ENCODE measurements at regions of chr13 and their contacts with region 1.

Region 1: GRCh38 chr13:19959831-19960652 is 1.5 kb downstream of the ZMYM2 start:
- DNase-seq: peak; percentile 90
- ATAC-seq: peak; percentile 82
- H3K4me3 ChIP-seq: peak overlapping the region; percentile 75 to 97 (median 96)
- H3K27ac ChIP-seq: peak overlapping the region; percentile 81
- H3K4me1 ChIP-seq: peaks cover 28% of the 10 kb centered on the region
- H3K27me3 ChIP-seq: no peaks in the 10 kb centered on the region; a peak in 1 of 5 replicates
- CTCF ChIP-seq: peak; percentile 82
- EP300 ChIP-seq: no peak
- POLR2A ChIP-seq: peak in 1 of 2 experiments; percentile 44; a peak in 1 of 4 replicates
- RAD21 ChIP-seq: peak; percentile 68; the same call in 1 of the 2 replicates

Region 2: DNA sequence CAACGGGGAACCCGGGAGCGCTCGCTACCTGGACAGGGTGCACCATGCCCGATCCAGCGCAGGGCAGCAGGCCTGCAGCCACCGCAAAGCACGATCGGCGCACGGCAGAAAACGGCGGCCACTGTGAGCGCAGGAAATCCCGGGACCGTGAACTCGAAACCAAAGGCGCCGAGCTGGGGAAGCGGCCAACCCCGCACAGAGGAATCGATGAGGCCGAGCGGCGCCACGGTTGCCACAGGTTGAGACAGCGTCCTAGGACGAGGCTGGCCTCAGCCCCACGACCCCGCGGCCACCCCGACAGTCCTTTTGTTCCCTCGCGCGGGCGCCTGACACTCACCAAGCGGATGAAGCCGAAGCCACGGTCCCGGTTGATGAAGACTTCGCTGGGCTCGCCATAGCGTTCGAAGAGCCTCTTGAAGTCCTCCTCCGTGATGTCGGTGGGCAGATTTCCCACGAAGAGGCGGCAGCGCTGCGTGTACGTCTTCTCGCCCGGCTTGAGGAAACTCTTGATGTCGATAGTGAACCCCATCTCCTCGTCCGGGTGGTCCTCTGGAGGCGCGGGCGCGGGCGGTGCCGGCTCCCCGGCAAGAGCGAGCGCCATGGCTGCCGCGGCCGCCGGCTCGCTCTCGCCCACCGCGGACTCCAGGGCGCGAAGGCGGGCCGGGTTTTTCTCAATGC is 177.9 kb before region 1 on chr13:
- CTCF ChIA-PET with region 1: no interaction called
- POLR2A ChIA-PET with region 1: no interaction called
- in situ Hi-C with region 1: no loop called
- intact Hi-C with region 1: loop called (anchors 5 kb)
- DNase-seq: no peak
- ATAC-seq: peak; percentile 70
- H3K4me3 ChIP-seq: peak overlapping the region; percentile 93 to 99 (median 94)
- H3K27ac ChIP-seq: peak overlapping the region; percentile 87
- H3K4me1 ChIP-seq: peaks cover 5% of the 10 kb centered on the region; the same call in 1 of the 2 replicates
- H3K27me3 ChIP-seq: no peaks in the 10 kb centered on the region; a peak in 1 of 5 replicates
- CTCF ChIP-seq: no peak
- EP300 ChIP-seq: no peak
- POLR2A ChIP-seq: no peak
- RAD21 ChIP-seq: no peak

Region 3: DNA sequence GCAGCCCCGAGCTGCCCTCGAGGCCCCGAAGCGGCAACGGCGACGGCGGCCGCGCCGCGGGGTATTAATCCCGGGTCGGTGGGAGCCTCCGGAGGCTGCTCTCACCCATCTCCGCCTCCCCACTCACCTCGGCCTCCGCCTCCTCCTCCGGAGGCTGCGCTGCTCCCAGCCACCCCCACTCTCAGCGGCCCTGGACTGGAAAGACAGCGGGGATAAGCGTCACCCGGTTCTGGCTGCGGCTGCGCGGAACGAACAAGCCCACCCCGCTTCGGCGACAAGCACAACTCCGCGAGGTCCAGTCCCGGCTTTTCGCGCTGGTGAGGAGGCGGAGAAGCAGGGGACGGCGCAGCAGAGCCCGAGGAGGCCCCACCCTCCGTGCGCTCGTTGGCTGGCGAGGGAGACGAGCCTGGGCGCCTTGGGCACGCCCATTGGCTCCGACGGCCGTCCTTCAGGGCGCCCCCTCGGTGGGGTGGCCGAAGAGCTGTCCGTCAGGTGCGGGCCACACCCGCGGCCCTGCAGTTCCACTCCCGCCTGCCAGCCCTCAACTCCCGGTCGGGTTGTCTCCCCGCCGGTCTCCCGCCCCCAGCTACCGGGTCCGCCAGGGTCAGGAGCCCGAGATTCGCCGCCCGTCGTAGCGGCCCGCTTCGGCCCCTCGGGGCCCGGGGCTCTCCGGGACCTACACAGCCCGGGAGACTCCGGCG is 96.6 kb before region 1 on chr13 and contains the start of gene ZMYM5:
- CTCF ChIA-PET with region 1: no interaction called
- POLR2A ChIA-PET with region 1: no interaction called
- in situ Hi-C with region 1: no loop called
- intact Hi-C with region 1: loop called (anchors 5 kb)
- DNase-seq: peak; percentile 93
- ATAC-seq: peak; percentile 96
- H3K4me3 ChIP-seq: peak within 1 kb of the TSS; percentile 81 to 86 (median 82)
- H3K27ac ChIP-seq: peak within 1 kb of the TSS; percentile 87
- H3K4me1 ChIP-seq: peaks cover 21% of the 10 kb centered on the region
- H3K27me3 ChIP-seq: no peaks in the 10 kb centered on the region; a peak in 1 of 5 replicates
- CTCF ChIP-seq: no peak
- EP300 ChIP-seq: no peak
- POLR2A ChIP-seq: peak; percentile 45 to 77
- RAD21 ChIP-seq: peak; percentile 10; the same call in 1 of the 2 replicates
- total RNA-seq, gene ZMYM5: 9.4 and 9.8 TPM in 2 replicates

Region 4: DNA sequence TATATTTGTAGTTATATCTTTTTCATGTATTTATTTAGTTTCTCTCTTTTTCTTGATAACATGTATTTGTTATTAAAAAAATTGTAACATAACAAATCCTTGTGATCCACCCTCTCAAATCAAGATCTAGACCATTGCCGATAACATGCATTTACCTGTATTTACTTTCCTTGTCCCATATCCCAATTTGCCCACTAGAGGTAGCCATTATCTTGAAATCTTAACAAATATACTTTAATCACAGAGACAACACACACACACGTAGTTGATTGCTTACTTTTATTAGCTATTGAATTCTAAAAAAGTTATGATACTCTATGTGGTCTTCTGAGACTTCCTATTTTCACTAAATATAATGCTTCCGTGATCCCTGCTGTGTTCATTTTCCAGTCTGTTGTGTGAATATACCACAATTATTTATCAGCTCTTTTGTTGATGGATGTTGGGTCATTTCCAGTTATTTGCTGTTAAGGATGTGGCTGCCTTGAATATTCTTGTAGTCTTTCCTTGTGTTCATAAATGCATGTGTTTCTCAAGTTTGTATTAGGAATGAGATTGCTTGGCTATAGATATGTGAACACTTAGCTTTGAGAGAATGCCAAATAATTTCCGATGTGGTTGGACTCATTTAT is 32.8 kb before region 1 on chr13:
- CTCF ChIA-PET with region 1: interaction called, 3 read pairs
- POLR2A ChIA-PET with region 1: no interaction called
- in situ Hi-C with region 1: no loop called
- intact Hi-C with region 1: loop called (anchors 5 kb)
- DNase-seq: peak; percentile 21
- ATAC-seq: peak; percentile 37; the same call in 1 of the 3 replicates
- H3K4me3 ChIP-seq: no peak overlapping the region
- H3K27ac ChIP-seq: no peak overlapping the region
- H3K4me1 ChIP-seq: peaks cover 4% of the 10 kb centered on the region
- H3K27me3 ChIP-seq: no peaks in the 10 kb centered on the region
- CTCF ChIP-seq: peak; percentile 42
- EP300 ChIP-seq: no peak
- POLR2A ChIP-seq: no peak
- RAD21 ChIP-seq: no peak